PC-9 (cell line): ENCODE measurements at regions of chr18 and their contacts with region 1.

Region 1: GRCh38 chr18:13051159-13051558 is 60.0 kb downstream of the CEP192 start:
- DNase-seq: no peak
- H3K4me3 ChIP-seq: no peak overlapping the region
- H3K27ac ChIP-seq: no peak overlapping the region
- H3K4me1 ChIP-seq: no peaks in the 10 kb centered on the region
- H3K27me3 ChIP-seq: no peaks in the 10 kb centered on the region
- CTCF ChIP-seq: no peak

Region 2: GRCh38 chr18:12960853-12961397 is 90.2 kb before region 1 on chr18:
- CTCF ChIA-PET with region 1: no interaction called
- POLR2A ChIA-PET with region 1: no interaction called
- intact Hi-C with region 1: no loop called
- DNase-seq: no peak
- H3K4me3 ChIP-seq: no peak overlapping the region
- H3K27ac ChIP-seq: no peak overlapping the region
- H3K4me1 ChIP-seq: no peaks in the 10 kb centered on the region
- H3K27me3 ChIP-seq: no peaks in the 10 kb centered on the region
- CTCF ChIP-seq: no peak

Region 3: GRCh38 chr18:13036622-13037320 is 14.4 kb before region 1 on chr18:
- CTCF ChIA-PET with region 1: no interaction called
- POLR2A ChIA-PET with region 1: no interaction called
- intact Hi-C with region 1: no loop called
- DNase-seq: no peak
- H3K4me3 ChIP-seq: no peak overlapping the region
- H3K27ac ChIP-seq: no peak overlapping the region
- H3K4me1 ChIP-seq: no peaks in the 10 kb centered on the region
- H3K27me3 ChIP-seq: no peaks in the 10 kb centered on the region
- CTCF ChIP-seq: no peak

Region 4: GRCh38 chr18:13103366-13103765 is 52.2 kb after region 1 on chr18:
- CTCF ChIA-PET with region 1: no interaction called
- POLR2A ChIA-PET with region 1: no interaction called
- intact Hi-C with region 1: loop called (anchors 10 kb)
- DNase-seq: no peak
- H3K4me3 ChIP-seq: no peak overlapping the region
- H3K27ac ChIP-seq: no peak overlapping the region
- H3K4me1 ChIP-seq: no peaks in the 10 kb centered on the region
- H3K27me3 ChIP-seq: no peaks in the 10 kb centered on the region
- CTCF ChIP-seq: peak; percentile 46; the same call in 1 of the 2 replicates